Body of pancreas (tissue), 4 donors: ENCODE measurements at regions of chr18 and their contacts with region 1.

Region 1: GRCh38 chr18:77000527-77000926 is 132.1 kb downstream of the MBP start:
- DNase-seq: peak; percentile 50 to 62 (median 54)
- ATAC-seq: peak; percentile 71
- H3K4me3 ChIP-seq: no peak overlapping the region
- H3K27ac ChIP-seq: no peak overlapping the region
- H3K4me1 ChIP-seq: peaks cover 3% of the 10 kb centered on the region
- H3K27me3 ChIP-seq: no peaks in the 10 kb centered on the region
- CTCF ChIP-seq: peak; percentile 90 to 98 (median 93)
- POLR2A ChIP-seq: no peak

Region 2: DNA sequence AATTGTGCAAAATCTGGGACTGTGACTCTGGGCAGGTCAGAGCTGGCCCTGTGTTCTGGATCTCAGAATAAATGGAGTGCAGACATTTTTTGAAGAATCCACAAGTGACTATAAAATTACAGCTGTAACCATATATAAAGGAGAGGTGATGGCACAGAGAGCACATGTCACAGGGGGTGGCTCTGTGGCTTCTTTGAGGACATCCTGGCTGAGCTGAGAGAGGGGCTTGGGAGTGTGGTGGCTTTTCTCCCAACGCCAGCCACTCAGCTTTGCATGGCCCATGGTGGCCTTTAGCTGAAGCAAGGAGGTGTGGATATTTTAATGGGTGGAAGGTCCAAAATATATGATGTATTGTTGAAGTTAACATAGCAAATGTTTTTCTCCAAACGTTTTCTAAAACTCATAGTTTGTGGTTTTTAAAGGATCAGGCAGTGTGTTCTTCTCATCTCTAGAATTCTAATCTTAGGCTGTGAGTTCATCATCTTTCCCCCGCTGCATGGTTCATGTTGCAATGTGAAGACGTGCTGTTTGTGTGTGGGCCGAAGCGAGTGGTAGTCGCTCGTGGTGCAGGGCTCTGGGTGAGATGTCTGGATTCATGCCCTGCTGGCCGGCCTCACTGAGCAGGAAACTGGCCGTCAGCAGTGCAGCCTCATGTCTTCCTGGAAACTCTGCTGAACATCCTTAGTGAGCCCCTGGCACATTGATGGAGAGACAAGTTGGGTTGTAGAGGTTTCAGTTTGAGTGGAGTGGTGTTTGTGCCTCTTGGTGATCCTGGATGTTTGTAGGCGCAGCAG is 68.3 kb before region 1 on chr18:
- intact Hi-C with region 1: no loop called
- DNase-seq: peak in 2 of 4 donors; percentile 23 to 34
- ATAC-seq: no peak
- H3K4me3 ChIP-seq: no peak overlapping the region
- H3K27ac ChIP-seq: no peak overlapping the region
- H3K4me1 ChIP-seq: no peaks in the 10 kb centered on the region
- H3K27me3 ChIP-seq: no peaks in the 10 kb centered on the region
- CTCF ChIP-seq: no peak
- POLR2A ChIP-seq: no peak

Region 3: GRCh38 chr18:77210249-77210648 is 209.7 kb after region 1 on chr18:
- intact Hi-C with region 1: loop called (anchors 5 kb)
- DNase-seq: no peak
- ATAC-seq: no peak
- H3K4me3 ChIP-seq: no peak overlapping the region
- H3K27ac ChIP-seq: no peak overlapping the region
- H3K4me1 ChIP-seq: peaks cover 18% of the 10 kb centered on the region
- H3K27me3 ChIP-seq: no peaks in the 10 kb centered on the region
- CTCF ChIP-seq: no peak
- POLR2A ChIP-seq: no peak

Region 4: GRCh38 chr18:77650799-77651385 is 650.4 kb after region 1 on chr18:
- intact Hi-C with region 1: loop called (anchors 10 kb)
- DNase-seq: peak; percentile 69 to 80 (median 75)
- ATAC-seq: peak; percentile 77
- H3K4me3 ChIP-seq: no peak overlapping the region
- H3K27ac ChIP-seq: no peak overlapping the region
- H3K4me1 ChIP-seq: peaks cover 5% of the 10 kb centered on the region
- H3K27me3 ChIP-seq: no peaks in the 10 kb centered on the region
- CTCF ChIP-seq: peak; percentile 85 to 99 (median 91)
- POLR2A ChIP-seq: no peak